MCF 10A (cell line): ENCODE measurements at regions of chr11 and their contacts with region 1.

Region 1: DNA sequence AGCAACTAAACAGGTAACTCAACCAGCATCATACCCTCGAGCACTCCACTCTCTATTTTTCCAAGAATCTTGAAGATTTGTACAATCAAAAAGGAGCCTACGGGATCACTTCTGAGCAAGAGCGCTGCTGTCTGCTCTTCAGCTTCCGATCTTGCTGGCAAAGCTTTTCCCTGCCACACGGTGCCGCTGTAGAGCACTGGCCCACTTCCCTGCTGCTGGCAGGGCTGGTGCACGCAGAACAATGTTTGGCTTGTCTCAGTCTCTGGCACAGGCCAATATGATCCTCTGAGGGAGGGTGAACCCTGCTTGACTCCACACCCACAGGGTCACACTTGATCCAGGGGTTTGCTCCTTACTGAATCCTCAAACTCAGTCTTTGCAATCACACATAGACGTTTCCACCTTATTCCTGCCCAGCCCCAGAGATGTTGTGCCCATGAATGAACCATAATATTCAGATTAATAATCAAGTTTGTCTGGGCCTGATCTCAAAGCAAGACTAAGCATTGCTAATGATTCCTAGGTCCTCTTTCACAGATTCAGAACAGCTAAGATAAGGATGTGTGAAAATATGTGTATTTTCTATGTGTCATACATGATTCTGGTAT is 536.6 kb downstream of the SOX6 start:
- DNase-seq: peak; percentile 72
- H3K4me3 Mint-ChIP-seq: no peak overlapping the region
- H3K27ac Mint-ChIP-seq: no peak overlapping the region
- H3K4me1 Mint-ChIP-seq: peaks cover 38% of the 10 kb centered on the region
- H3K27me3 Mint-ChIP-seq: no peaks in the 10 kb centered on the region
- CTCF ChIP-seq: peak; percentile 87

Region 2: DNA sequence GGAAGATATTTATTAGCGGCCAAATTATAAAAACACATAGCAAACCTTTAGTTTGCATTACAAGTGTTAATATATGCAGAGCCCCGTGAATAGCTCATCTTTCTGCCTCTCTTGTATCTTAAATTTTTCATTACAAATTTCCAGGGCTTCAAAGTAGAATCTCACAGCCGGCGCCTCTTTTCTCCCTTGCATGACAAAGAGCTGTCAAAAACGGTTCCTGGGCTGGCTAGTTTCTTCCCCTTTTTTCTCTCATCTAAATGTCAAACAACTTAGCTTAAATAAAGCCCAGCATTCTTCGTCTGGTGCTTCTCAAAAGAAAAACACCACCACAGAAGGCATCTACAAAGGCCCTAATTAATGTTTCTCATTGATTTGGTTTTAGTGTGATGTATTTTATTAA is 452.1 kb before region 1 on chr11:
- CTCF ChIA-PET with region 1: no interaction called
- POLR2A ChIA-PET with region 1: no interaction called
- intact Hi-C with region 1: no loop called
- DNase-seq: no peak
- H3K4me3 Mint-ChIP-seq: no peak overlapping the region
- H3K27ac Mint-ChIP-seq: no peak overlapping the region
- H3K4me1 Mint-ChIP-seq: no peaks in the 10 kb centered on the region
- H3K27me3 Mint-ChIP-seq: peaks cover 66% of the 10 kb centered on the region
- CTCF ChIP-seq: no peak

Region 3: GRCh38 chr11:15650105-15650938 is 169.5 kb before region 1 on chr11:
- CTCF ChIA-PET with region 1: interaction called, 20 read pairs
- POLR2A ChIA-PET with region 1: no interaction called
- intact Hi-C with region 1: loop called (anchors 2 kb)
- DNase-seq: peak; percentile 92
- H3K4me3 Mint-ChIP-seq: peak overlapping the region; percentile 7
- H3K27ac Mint-ChIP-seq: no peak overlapping the region
- H3K4me1 Mint-ChIP-seq: no peaks in the 10 kb centered on the region
- H3K27me3 Mint-ChIP-seq: peaks cover 14% of the 10 kb centered on the region
- CTCF ChIP-seq: peak; percentile 97

Region 4: GRCh38 chr11:15707971-15708370 is 111.8 kb before region 1 on chr11:
- CTCF ChIA-PET with region 1: interaction called, 3 read pairs
- POLR2A ChIA-PET with region 1: no interaction called
- intact Hi-C with region 1: loop called (anchors 5 kb)
- DNase-seq: peak; percentile 86
- H3K4me3 Mint-ChIP-seq: no peak overlapping the region
- H3K27ac Mint-ChIP-seq: peak overlapping the region; percentile 43
- H3K4me1 Mint-ChIP-seq: peaks cover 20% of the 10 kb centered on the region
- H3K27me3 Mint-ChIP-seq: peaks cover 42% of the 10 kb centered on the region
- CTCF ChIP-seq: no peak

Region 5: GRCh38 chr11:15770798-15771414 is 48.9 kb before region 1 on chr11:
- CTCF ChIA-PET with region 1: interaction called, 7 read pairs
- POLR2A ChIA-PET with region 1: interaction called, 3 read pairs
- intact Hi-C with region 1: loop called (anchors 2 kb)
- DNase-seq: peak; percentile 65
- H3K4me3 Mint-ChIP-seq: no peak overlapping the region
- H3K27ac Mint-ChIP-seq: no peak overlapping the region
- H3K4me1 Mint-ChIP-seq: no peaks in the 10 kb centered on the region
- H3K27me3 Mint-ChIP-seq: peaks cover 28% of the 10 kb centered on the region
- CTCF ChIP-seq: peak; percentile 67

Region 6: DNA sequence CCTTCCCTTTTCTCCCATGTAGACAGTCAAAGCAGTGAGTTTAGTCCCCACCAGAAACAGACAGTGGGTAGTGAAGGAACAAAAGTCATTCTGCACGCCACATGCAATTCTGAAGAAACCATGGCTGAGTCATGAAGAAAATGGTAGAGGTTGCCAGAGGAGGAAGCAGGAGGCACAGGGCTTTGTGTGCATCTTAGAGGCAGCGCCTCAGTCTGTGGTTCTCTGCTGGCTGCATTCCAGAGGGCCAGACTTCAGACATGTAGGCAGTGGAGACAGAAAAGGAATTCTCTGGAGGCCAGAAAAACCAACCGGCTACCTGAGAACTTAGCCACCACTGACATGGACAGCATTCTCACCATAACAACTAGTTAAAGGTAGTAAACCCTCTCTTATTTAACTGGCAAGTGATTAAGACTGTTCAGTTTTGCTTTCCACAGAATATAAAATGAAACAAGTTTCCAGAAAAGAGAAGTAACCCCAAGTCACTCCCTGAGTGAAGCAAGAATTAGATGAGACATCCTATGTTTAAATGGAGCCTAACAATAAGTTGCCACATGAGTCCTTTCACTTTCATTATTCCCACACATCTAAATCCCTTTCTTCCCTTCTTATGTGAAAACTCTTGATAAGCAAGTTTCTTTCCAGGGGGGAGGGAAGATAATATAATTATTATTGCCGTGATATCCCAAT is 19.5 kb before region 1 on chr11:
- CTCF ChIA-PET with region 1: interaction called, 9 read pairs
- POLR2A ChIA-PET with region 1: interaction called, 6 read pairs
- intact Hi-C with region 1: loop called (anchors 2 kb)
- DNase-seq: peak; percentile 92
- H3K4me3 Mint-ChIP-seq: peak overlapping the region; percentile 14
- H3K27ac Mint-ChIP-seq: peak overlapping the region; percentile 87
- H3K4me1 Mint-ChIP-seq: peaks cover 9% of the 10 kb centered on the region
- H3K27me3 Mint-ChIP-seq: no peaks in the 10 kb centered on the region
- CTCF ChIP-seq: no peak

Region 7: DNA sequence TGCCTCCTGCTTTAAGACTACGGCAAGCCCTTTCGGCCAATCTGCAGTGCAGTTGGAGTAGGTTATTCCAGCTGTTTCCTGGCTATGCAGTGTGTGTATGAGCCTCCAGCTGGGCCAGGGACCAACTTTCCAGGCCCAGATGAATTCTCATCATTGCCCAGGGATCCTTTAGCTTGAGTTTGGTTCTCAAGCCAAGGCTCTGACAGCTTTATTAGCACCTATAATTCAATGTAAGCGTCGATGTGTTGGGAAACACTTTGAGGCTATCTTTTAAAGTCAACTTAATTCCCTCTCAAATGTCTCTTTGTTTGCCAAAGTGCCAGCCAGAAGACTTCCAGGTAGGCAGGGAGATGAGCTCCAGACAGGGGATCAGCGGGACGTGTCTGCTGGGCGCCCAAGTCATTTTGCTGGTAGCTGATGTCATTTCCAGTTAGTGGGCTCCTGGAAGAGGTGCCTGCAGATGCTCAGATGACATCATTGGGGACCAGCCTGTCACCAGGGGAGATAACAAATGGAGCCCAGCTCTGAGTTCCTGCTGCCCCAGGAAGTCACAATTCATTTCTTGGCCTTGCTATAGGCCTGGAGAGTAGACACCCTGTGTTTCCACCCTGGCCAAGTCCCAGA is 16.1 kb after region 1 on chr11:
- CTCF ChIA-PET with region 1: interaction called, 29 read pairs
- POLR2A ChIA-PET with region 1: no interaction called
- intact Hi-C with region 1: no loop called
- DNase-seq: no peak
- H3K4me3 Mint-ChIP-seq: no peak overlapping the region
- H3K27ac Mint-ChIP-seq: no peak overlapping the region
- H3K4me1 Mint-ChIP-seq: peaks cover 6% of the 10 kb centered on the region
- H3K27me3 Mint-ChIP-seq: no peaks in the 10 kb centered on the region
- CTCF ChIP-seq: no peak